ENCODE measurements at regions of chr1 and their contacts with region 1.

Region 1: DNA sequence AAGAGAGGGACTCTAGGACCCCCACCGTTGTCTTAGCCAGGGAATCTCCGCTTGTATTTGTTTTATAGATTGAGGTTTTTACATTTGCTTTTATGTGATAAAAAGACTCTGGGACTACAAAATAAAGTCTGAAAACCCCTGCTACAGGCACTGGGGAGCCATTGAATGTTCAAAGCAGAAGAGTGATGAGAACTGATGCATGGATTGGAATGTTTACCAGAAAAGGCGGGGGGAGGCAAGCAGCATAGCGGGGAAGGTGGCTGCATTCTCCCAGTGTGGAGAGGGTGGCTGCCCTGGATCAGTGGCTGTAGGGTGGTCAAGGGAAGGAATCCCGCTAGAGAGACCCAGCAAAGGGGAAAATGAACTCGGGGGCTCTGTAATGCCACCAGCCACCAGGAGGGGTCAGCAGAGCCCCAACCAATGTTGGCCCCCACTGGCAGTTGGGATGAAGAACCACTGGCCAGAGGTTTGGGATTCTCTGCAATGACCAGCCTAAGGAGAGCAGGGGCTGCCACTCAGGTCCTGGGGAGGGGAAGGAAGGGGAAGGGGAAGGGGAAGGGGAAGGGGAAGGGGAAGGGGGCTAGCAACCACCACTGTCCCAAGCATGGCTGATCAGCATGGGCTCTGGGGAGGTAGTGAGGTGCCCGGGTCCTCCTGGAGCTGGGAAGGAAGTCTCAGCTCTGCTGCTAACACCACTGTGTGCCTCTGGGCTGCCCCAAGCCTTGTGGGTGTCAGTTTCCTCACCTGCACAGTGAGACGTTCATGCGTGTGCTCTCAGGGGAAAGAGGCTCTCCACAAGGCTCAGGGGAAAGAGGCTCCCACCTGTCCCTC is 19.2 kb upstream of the PEF1 start:
- DNase-seq: peak; percentile 67 to 75
- ATAC-seq: peak; percentile 62 to 95 (median 85)
- H3K4me3 ChIP-seq: no peak overlapping the region
- H3K4me3 Mint-ChIP-seq: no peak overlapping the region
- H3K27ac ChIP-seq: no peak overlapping the region
- H3K27ac Mint-ChIP-seq: no peak overlapping the region
- H3K4me1 ChIP-seq: peaks cover 7% of the 10 kb centered on the region
- H3K4me1 Mint-ChIP-seq: no peaks in the 10 kb centered on the region
- H3K27me3 ChIP-seq: no peaks in the 10 kb centered on the region
- H3K27me3 Mint-ChIP-seq: peaks cover 0 to 3% of the 10 kb centered on the region in 2 donors
- CTCF ChIP-seq: peak; percentile 87

Region 2: GRCh38 chr1:30707412-30708360 is 956.2 kb before region 1 on chr1:
- intact Hi-C with region 1: no loop called
- DNase-seq: peak in 1 of 2 donors; percentile 73
- ATAC-seq: peak; percentile 63 to 84 (median 76)
- H3K4me3 ChIP-seq: no peak overlapping the region
- H3K4me3 Mint-ChIP-seq: no peak overlapping the region
- H3K27ac ChIP-seq: no peak overlapping the region
- H3K27ac Mint-ChIP-seq: no peak overlapping the region
- H3K4me1 ChIP-seq: no peaks in the 10 kb centered on the region
- H3K4me1 Mint-ChIP-seq: peaks cover 0 to 8% of the 10 kb centered on the region in 2 donors
- H3K27me3 ChIP-seq: no peaks in the 10 kb centered on the region
- H3K27me3 Mint-ChIP-seq: peaks cover 0 to 14% of the 10 kb centered on the region in 2 donors
- CTCF ChIP-seq: peak; percentile 19

Region 3: GRCh38 chr1:31564134-31564989 is 99.5 kb before region 1 on chr1:
- intact Hi-C with region 1: loop called (anchors 1 kb)
- DNase-seq: peak in 1 of 2 donors; percentile 69
- ATAC-seq: peak; percentile 66 to 78 (median 74)
- H3K4me3 ChIP-seq: no peak overlapping the region
- H3K4me3 Mint-ChIP-seq: no peak overlapping the region
- H3K27ac ChIP-seq: no peak overlapping the region
- H3K27ac Mint-ChIP-seq: no peak overlapping the region
- H3K4me1 ChIP-seq: no peaks in the 10 kb centered on the region
- H3K4me1 Mint-ChIP-seq: no peaks in the 10 kb centered on the region
- H3K27me3 ChIP-seq: no peaks in the 10 kb centered on the region
- H3K27me3 Mint-ChIP-seq: peaks cover 22 to 34% of the 10 kb centered on the region in 2 donors
- CTCF ChIP-seq: peak; percentile 78

Region 4: GRCh38 chr1:31715087-31715872 is 51.4 kb after region 1 on chr1:
- intact Hi-C with region 1: no loop called
- DNase-seq: peak in 1 of 2 donors; percentile 51
- ATAC-seq: peak; percentile 56 to 89 (median 76)
- H3K4me3 ChIP-seq: peak overlapping the region; percentile 27
- H3K4me3 Mint-ChIP-seq: peak overlapping the region; percentile 77
- H3K27ac ChIP-seq: no peak overlapping the region
- H3K27ac Mint-ChIP-seq: peak overlapping the region in 1 of 2 donors; percentile 67
- H3K4me1 ChIP-seq: peaks cover 20% of the 10 kb centered on the region
- H3K4me1 Mint-ChIP-seq: peaks cover 15 to 20% of the 10 kb centered on the region in 2 donors
- H3K27me3 ChIP-seq: peaks cover 11% of the 10 kb centered on the region
- H3K27me3 Mint-ChIP-seq: peaks cover 47 to 48% of the 10 kb centered on the region in 2 donors
- CTCF ChIP-seq: peak; percentile 53

Region 5: DNA sequence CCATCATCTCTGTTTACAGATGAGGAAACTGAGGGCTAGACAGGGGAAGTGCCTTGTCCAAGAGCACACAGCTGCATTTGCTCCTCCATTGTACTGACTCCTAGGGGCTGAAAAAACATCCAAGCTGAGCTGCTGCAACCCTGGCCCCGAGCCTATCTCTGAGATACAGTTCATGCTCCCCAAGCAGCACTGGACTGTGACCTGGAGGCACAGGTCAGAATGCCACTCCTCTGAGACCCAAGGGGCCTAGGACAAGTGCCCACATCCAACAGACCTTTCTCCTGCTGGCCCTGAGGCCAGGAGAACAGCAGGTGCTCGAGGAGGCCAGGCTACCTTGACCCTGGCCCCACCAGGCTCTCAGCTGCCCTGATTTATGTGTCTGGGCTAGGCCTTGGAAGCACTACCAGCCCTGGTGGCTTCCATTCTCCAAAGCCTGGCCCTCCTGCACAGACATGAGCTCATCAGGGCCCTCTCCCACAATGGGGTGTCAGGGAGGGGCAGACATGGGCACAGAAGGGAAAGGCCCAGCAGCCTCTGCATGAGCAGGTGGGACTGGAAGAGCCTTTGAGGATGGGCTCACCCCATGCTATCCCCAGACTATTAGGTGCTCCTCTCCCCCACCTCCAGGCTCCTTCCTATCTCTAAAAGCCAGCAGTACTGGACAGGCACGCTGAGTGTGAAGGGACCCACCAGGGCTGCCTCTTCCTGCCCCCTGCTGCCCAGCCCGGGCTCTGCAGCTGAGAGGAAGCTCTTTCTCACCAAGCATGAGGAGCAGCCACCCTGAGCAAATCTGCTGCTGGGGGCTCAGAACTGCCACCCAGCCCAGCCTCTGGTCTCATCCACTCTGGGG is 81.5 kb after region 1 on chr1:
- intact Hi-C with region 1: loop called (anchors 5 kb)
- DNase-seq: peak; percentile 62 to 64
- ATAC-seq: peak; percentile 70 to 81 (median 79)
- H3K4me3 ChIP-seq: no peak overlapping the region
- H3K4me3 Mint-ChIP-seq: peak overlapping the region; percentile 56
- H3K27ac ChIP-seq: no peak overlapping the region
- H3K27ac Mint-ChIP-seq: peak overlapping the region in 1 of 2 donors; percentile 89
- H3K4me1 ChIP-seq: peaks cover 68% of the 10 kb centered on the region
- H3K4me1 Mint-ChIP-seq: peaks cover 48 to 56% of the 10 kb centered on the region in 2 donors
- H3K27me3 ChIP-seq: no peaks in the 10 kb centered on the region
- H3K27me3 Mint-ChIP-seq: no peaks in the 10 kb centered on the region
- CTCF ChIP-seq: peak; percentile 67

Region 6: GRCh38 chr1:32063261-32063681 is 399.4 kb after region 1 on chr1:
- intact Hi-C with region 1: loop called (anchors 5 kb)
- DNase-seq: peak in 1 of 2 donors; percentile 62
- ATAC-seq: peak; percentile 52 to 75 (median 59)
- H3K4me3 ChIP-seq: no peak overlapping the region
- H3K4me3 Mint-ChIP-seq: no peak overlapping the region
- H3K27ac ChIP-seq: no peak overlapping the region
- H3K27ac Mint-ChIP-seq: peak overlapping the region; percentile 29 to 59
- H3K4me1 ChIP-seq: peaks cover 16% of the 10 kb centered on the region
- H3K4me1 Mint-ChIP-seq: peaks cover 0 to 13% of the 10 kb centered on the region in 2 donors
- H3K27me3 ChIP-seq: no peaks in the 10 kb centered on the region
- H3K27me3 Mint-ChIP-seq: no peaks in the 10 kb centered on the region
- CTCF ChIP-seq: peak; percentile 47

Region 7: GRCh38 chr1:32413507-32414185 is 749.8 kb after region 1 on chr1:
- intact Hi-C with region 1: loop called (anchors 10 kb)
- DNase-seq: peak; percentile 48 to 92
- ATAC-seq: peak; percentile 81 to 85 (median 85)
- H3K4me3 ChIP-seq: no peak overlapping the region
- H3K4me3 Mint-ChIP-seq: no peak overlapping the region
- H3K27ac ChIP-seq: no peak overlapping the region
- H3K27ac Mint-ChIP-seq: no peak overlapping the region
- H3K4me1 ChIP-seq: no peaks in the 10 kb centered on the region
- H3K4me1 Mint-ChIP-seq: peaks cover 0 to 4% of the 10 kb centered on the region in 2 donors
- H3K27me3 ChIP-seq: no peaks in the 10 kb centered on the region
- H3K27me3 Mint-ChIP-seq: peaks cover 8 to 23% of the 10 kb centered on the region in 2 donors
- CTCF ChIP-seq: peak; percentile 90

Measured in natural killer cell (primary cell).